GM10248 (cell line): ENCODE measurements at regions of chr5 and their contacts with region 1.

Region 1: GRCh38 chr5:126826619-126827215 is 49.8 kb downstream of the LMNB1 start:
- DNase-seq: no peak
- CTCF ChIP-seq: no peak

Region 2: DNA sequence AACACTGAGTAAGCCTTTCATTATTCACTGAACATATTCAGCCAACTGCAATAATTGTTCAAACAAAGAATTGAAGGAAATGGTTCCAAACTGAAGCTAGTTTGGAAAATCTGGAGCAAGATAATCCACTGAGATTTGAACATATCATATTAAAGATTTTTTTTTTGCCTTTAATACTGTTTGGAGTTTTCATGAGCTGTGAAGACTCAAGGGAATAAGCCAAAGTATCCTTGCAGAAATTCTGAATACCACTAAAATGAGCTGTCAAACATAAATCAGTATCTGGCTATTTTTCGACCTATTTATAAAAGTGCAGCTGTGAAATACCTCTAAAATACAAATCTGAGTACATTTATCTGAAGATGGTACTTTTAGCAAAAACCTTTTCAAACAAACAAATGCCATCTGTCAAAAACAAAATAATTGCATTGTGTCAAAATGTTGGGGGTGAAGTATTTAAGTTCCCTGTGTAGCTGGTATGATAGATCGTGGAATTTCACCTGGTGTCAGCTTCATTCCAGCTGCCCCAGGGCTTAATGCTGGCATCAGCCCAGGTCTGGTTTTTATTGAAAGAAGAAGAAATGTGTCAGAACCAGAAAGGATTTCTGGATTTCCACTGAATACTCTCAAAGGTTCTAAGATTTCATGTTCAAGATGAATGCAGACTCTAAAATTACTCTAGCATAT is 552.5 kb before region 1 on chr5:
- CTCF ChIA-PET with region 1: no interaction called
- POLR2A ChIA-PET with region 1: no interaction called
- DNase-seq: no peak
- CTCF ChIP-seq: no peak

Region 3: DNA sequence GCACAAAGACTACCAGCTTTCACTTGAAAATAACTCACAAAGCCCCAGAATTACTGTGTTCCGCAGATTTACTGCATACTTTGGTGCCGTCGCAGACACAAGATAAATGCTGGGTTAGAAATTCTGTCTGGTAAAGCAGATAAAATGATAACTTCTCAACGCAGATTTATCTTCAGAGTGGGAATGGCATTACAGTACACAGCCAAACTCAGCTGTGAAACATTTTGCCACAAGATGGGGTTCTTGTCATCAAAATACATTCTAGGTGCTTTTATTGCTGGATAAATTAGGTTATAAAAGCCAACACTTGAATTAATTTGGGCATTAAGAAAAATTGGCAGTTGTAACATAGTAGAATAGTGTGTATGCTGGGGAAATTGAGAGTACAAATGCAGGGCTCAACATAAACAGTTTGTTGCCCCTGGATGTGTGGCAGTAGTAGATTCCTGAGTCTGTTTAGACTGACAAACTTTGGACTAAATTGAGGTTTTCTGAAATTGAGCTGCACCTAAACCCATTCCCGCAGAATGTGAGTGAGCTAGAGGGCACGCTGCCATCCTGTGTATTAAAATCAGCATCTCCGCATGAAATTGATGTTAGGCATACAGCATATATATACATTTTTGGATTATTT is 11.3 kb after region 1 on chr5:
- CTCF ChIA-PET with region 1: interaction called, 11 read pairs
- POLR2A ChIA-PET with region 1: no interaction called
- DNase-seq: no peak
- CTCF ChIP-seq: peak; percentile 38

Region 4: DNA sequence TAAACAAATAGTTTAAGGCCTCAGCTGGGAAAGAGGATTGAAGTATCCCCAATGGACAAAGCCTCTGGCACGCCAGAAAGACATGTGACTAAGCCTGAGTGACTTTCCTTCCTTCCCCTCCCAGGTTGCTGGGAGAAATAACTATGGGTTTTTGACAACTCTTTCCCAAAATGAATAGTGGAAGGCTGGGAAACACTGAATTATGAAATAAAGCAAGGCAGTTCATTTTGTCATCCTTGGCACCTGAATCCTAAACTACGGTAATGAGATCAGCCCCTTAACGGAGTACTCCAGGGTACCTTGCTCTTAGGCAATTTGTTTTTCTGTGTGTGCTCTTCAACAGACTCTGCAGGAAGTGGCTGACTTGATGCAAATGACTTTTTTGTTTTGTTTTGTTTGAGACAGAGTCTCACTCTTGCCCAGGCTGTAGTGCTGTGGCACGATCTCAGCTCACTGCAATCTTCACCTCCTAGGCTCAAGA is 25.4 kb after region 1 on chr5:
- CTCF ChIA-PET with region 1: no interaction called
- POLR2A ChIA-PET with region 1: no interaction called
- DNase-seq: no peak
- CTCF ChIP-seq: no peak

Region 5: GRCh38 chr5:127011961-127012644 is 185.4 kb after region 1 on chr5:
- CTCF ChIA-PET with region 1: no interaction called
- POLR2A ChIA-PET with region 1: no interaction called
- DNase-seq: peak; percentile 28
- CTCF ChIP-seq: no peak